ENCODE measurements at regions of chr6 and their contacts with region 1.

Region 1: GRCh38 chr6:34196126-34196830 is 40.4 kb upstream of the HMGA1 start:
- DNase-seq: peak; percentile 81 to 89 (median 85)
- H3K4me3 ChIP-seq: peak overlapping the region; percentile 47 to 58
- H3K4me3 Mint-ChIP-seq: peak overlapping the region; percentile 79 to 89 (median 85)
- H3K27ac ChIP-seq: peak overlapping the region; percentile 48
- H3K27ac Mint-ChIP-seq: peak overlapping the region in 6 of 7 donors; percentile 42 to 78 (median 56)
- H3K4me1 ChIP-seq: peaks cover 9% of the 10 kb centered on the region
- H3K4me1 Mint-ChIP-seq: peaks cover 2 to 9% (median 5%) of the 10 kb centered on the region in 4 donors
- H3K27me3 ChIP-seq: no peaks in the 10 kb centered on the region
- H3K27me3 Mint-ChIP-seq: no peaks in the 10 kb centered on the region

Region 2: GRCh38 chr6:34182751-34183531 is 13.3 kb before region 1 on chr6:
- CTCF ChIA-PET with region 1: interaction called, 36 read pairs
- POLR2A ChIA-PET with region 1: interaction called, 14 read pairs
- intact Hi-C with region 1: no loop called
- DNase-seq: peak; percentile 79 to 90 (median 81)
- H3K4me3 ChIP-seq: peak overlapping the region in 1 of 2 donors; percentile 32
- H3K4me3 Mint-ChIP-seq: peak overlapping the region; percentile 45 to 80 (median 74)
- H3K27ac ChIP-seq: peak overlapping the region; percentile 33
- H3K27ac Mint-ChIP-seq: peak overlapping the region; percentile 72 to 95 (median 82)
- H3K4me1 ChIP-seq: peaks cover 25% of the 10 kb centered on the region
- H3K4me1 Mint-ChIP-seq: peaks cover 22 to 26% (median 24%) of the 10 kb centered on the region in 4 donors
- H3K27me3 ChIP-seq: no peaks in the 10 kb centered on the region
- H3K27me3 Mint-ChIP-seq: no peaks in the 10 kb centered on the region

Region 3: GRCh38 chr6:34236131-34236996 is 40.1 kb after region 1 on chr6 and contains the start of gene HMGA1:
- CTCF ChIA-PET with region 1: interaction called, 6 read pairs
- POLR2A ChIA-PET with region 1: interaction called, 24 read pairs
- intact Hi-C with region 1: loop called (anchors 1 kb)
- DNase-seq: peak; percentile 83 to 92 (median 85)
- H3K4me3 ChIP-seq: peak within 1 kb of the TSS; percentile 57 to 79
- H3K4me3 Mint-ChIP-seq: peak within 1 kb of the TSS; percentile 91 to 99 (median 94)
- H3K27ac ChIP-seq: peak within 1 kb of the TSS; percentile 97
- H3K27ac Mint-ChIP-seq: peak within 1 kb of the TSS; percentile 97 to 100 (median 99)
- H3K4me1 ChIP-seq: peaks cover 28% of the 10 kb centered on the region
- H3K4me1 Mint-ChIP-seq: peaks cover 14 to 48% (median 28%) of the 10 kb centered on the region in 4 donors
- H3K27me3 ChIP-seq: no peaks in the 10 kb centered on the region
- H3K27me3 Mint-ChIP-seq: no peaks in the 10 kb centered on the region
- total RNA-seq, gene HMGA1: 74.7 to 77.5 TPM

Region 4: GRCh38 chr6:34414999-34415858 is 219.0 kb after region 1 on chr6:
- CTCF ChIA-PET with region 1: interaction called, 60 read pairs
- POLR2A ChIA-PET with region 1: interaction called, 10 read pairs
- intact Hi-C with region 1: loop called (anchors 1 kb)
- DNase-seq: peak; percentile 50 to 68 (median 51)
- H3K4me3 ChIP-seq: no peak overlapping the region
- H3K4me3 Mint-ChIP-seq: no peak overlapping the region
- H3K27ac ChIP-seq: no peak overlapping the region
- H3K27ac Mint-ChIP-seq: peak overlapping the region in 4 of 7 donors; percentile 2 to 86 (median 16)
- H3K4me1 ChIP-seq: no peaks in the 10 kb centered on the region
- H3K4me1 Mint-ChIP-seq: peaks cover 3 to 19% (median 5%) of the 10 kb centered on the region in 4 donors
- H3K27me3 ChIP-seq: no peaks in the 10 kb centered on the region
- H3K27me3 Mint-ChIP-seq: no peaks in the 10 kb centered on the region

Region 5: DNA sequence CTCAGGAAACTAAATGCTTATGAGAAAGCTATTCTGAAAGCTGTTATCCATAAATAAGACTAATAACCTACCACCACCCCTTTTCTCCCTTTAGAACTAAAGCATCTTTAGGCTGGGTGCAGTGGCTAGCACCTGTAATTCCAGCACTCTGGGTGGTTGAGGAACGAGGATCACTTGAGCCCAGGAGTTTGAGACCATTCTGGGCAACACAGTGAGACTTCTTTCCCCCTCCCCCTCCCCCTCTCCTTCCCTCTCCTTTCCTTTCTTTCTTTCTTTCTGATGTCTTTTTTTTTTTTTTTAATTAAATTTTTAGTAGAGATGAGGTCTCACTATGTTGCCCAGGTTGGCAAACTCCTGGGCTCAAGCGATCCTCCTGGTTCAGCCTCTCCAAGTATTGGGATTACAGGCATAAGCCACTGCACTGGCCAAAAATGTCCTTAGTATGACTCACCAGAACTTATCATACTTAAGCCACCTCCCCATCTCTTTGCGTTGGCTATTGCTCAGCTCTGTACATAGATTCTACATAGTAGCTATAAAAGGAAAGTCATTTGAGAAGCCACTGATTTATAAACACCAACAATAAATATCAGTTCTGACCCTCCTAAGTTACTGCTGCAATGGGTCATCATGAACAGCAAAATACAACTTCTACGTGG is 414.7 kb after region 1 on chr6:
- CTCF ChIA-PET with region 1: interaction called, 30 read pairs
- POLR2A ChIA-PET with region 1: interaction called, 3 read pairs
- intact Hi-C with region 1: loop called (anchors 1 kb)
- DNase-seq: no peak
- H3K4me3 ChIP-seq: no peak overlapping the region
- H3K4me3 Mint-ChIP-seq: no peak overlapping the region
- H3K27ac ChIP-seq: no peak overlapping the region
- H3K27ac Mint-ChIP-seq: peak overlapping the region in 5 of 7 donors; percentile 48 to 74 (median 63)
- H3K4me1 ChIP-seq: peaks cover 8% of the 10 kb centered on the region
- H3K4me1 Mint-ChIP-seq: peaks cover 10 to 23% (median 15%) of the 10 kb centered on the region in 4 donors
- H3K27me3 ChIP-seq: no peaks in the 10 kb centered on the region
- H3K27me3 Mint-ChIP-seq: no peaks in the 10 kb centered on the region